ENCODE measurements at regions of chr21 and their contacts with region 1.

Region 1: DNA sequence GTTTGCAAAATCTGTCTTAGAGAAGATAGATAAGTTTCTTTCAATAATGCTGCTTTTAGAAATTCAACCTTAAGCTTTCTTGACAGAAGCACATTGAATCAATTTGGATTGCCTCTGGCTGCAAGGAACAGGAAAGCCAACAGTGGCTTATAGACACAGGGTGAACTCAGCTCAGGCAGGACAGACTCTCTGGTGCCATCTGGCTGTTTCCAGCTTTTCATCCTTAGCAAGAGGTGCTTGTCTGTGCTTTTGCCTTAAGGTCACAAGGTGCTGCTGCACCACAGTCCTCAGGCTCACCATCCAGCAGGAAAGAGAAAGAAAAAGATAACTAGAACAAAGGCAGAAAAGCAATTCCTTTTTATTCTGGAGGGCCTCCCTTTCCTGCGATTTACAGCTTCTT is 93.7 kb upstream of the ETS2 start:
- DNase-seq: no peak
- ATAC-seq: peak; percentile 60 to 78
- H3K4me3 ChIP-seq: no peak overlapping the region
- H3K27ac ChIP-seq: no peak overlapping the region
- H3K4me1 ChIP-seq: no peaks in the 10 kb centered on the region
- H3K27me3 ChIP-seq: peaks cover 5% of the 10 kb centered on the region

Region 2: DNA sequence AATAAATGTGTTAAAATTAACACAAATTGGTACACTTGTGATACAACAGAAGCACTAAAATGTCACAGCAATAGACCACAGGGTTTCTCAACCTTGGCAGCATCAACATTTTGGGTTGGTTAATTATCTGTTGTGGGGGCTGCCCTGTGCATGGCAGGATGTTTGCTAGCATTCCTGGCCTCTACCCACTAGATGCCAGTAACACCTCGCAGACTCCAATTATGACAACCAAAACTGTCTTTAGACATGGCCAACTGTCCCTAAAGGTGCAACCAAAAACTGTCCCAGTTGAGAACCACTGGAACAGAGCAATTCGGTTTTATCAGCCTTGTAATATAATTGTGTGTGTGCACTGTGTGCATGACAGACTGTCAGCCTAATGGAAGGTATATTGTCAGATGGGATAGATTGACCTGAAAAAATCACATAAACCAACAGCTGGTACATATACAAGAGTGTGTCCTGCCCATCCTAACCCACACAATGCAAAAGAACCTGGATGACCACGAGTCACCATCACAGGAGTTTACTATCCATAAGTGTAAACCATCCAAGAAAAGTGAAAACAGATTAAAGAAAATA is 200.3 kb before region 1 on chr21:
- intact Hi-C with region 1: loop called in 2 of 4 experiments (anchors 10 kb)
- DNase-seq: no peak
- ATAC-seq: no peak
- H3K4me3 ChIP-seq: no peak overlapping the region
- H3K27ac ChIP-seq: no peak overlapping the region
- H3K4me1 ChIP-seq: peaks cover 3% of the 10 kb centered on the region
- H3K27me3 ChIP-seq: no peaks in the 10 kb centered on the region

Region 3: GRCh38 chr21:38965909-38966504 is 253.9 kb after region 1 on chr21:
- intact Hi-C with region 1: no loop called
- DNase-seq: no peak
- ATAC-seq: peak; percentile 62 to 66
- H3K4me3 ChIP-seq: no peak overlapping the region
- H3K27ac ChIP-seq: no peak overlapping the region
- H3K4me1 ChIP-seq: no peaks in the 10 kb centered on the region
- H3K27me3 ChIP-seq: no peaks in the 10 kb centered on the region

Region 4: GRCh38 chr21:39430457-39430856 is 718.4 kb after region 1 on chr21:
- intact Hi-C with region 1: no loop called
- DNase-seq: no peak
- ATAC-seq: no peak
- H3K4me3 ChIP-seq: no peak overlapping the region
- H3K27ac ChIP-seq: no peak overlapping the region
- H3K4me1 ChIP-seq: no peaks in the 10 kb centered on the region
- H3K27me3 ChIP-seq: no peaks in the 10 kb centered on the region

Measured in right cardiac atrium (tissue), 5 donors.